ENCODE measurements at regions of chr1 and their contacts with region 1.

Region 1: GRCh38 chr1:152001391-152002249 is 8.0 kb upstream of the S100A10 start:
- DNase-seq: peak; percentile 43
- CTCF ChIP-seq: peak; percentile 81

Region 2: DNA sequence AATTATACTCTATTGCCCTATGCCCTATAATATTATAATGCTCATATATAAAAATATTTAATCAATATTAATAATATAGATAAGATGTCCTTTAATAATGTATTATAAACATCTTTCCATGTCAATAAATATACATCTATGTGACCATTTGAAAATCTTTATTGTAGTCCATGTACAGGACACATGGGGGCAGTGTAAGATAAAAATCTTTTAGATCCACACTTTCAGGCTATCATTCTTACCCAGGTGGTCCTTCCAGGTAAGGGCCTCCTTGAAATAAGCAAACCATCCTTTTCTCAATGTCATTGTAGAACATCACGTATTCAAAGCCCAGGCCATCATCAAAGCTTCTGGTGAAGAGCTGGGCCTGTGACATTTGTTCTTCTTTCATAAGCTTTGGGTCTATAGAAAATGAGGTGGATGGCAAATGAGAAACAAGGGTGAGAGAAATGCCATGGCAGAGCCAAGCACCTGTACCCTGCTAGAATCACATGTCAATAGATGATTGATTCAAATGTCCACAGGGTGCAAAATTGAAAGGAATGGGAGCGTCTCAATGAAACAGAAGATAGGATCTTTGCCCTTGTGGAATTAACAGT is 112.5 kb before region 1 on chr1:
- in situ Hi-C with region 1: loop called (anchors 10 kb)
- DNase-seq: peak; percentile 33
- CTCF ChIP-seq: peak; percentile 40

Region 3: GRCh38 chr1:151934048-151934493 is 67.5 kb before region 1 on chr1:
- in situ Hi-C with region 1: loop called (anchors 10 kb)
- DNase-seq: peak; percentile 46
- CTCF ChIP-seq: peak; percentile 83